T-cell (primary cell): ENCODE measurements at regions of chr2 and their contacts with region 1.

Region 1: GRCh38 chr2:142280831-142281230 is 150.0 kb upstream of the LRP1B start:
- DNase-seq: no peak
- ATAC-seq: no peak
- H3K4me3 ChIP-seq: no peak overlapping the region
- H3K4me3 Mint-ChIP-seq: no peak overlapping the region
- H3K27ac ChIP-seq: no peak overlapping the region
- H3K27ac Mint-ChIP-seq: no peak overlapping the region
- H3K4me1 ChIP-seq: no peaks in the 10 kb centered on the region
- H3K4me1 Mint-ChIP-seq: no peaks in the 10 kb centered on the region
- H3K27me3 ChIP-seq: no peaks in the 10 kb centered on the region
- H3K27me3 Mint-ChIP-seq: no peaks in the 10 kb centered on the region

Region 2: GRCh38 chr2:142515493-142515892 is 234.7 kb after region 1 on chr2:
- CTCF ChIA-PET with region 1: no interaction called
- POLR2A ChIA-PET with region 1: interaction called in 1 of 2 experiments, 11 read pairs
- DNase-seq: no peak
- ATAC-seq: no peak
- H3K4me3 ChIP-seq: no peak overlapping the region
- H3K4me3 Mint-ChIP-seq: no peak overlapping the region
- H3K27ac ChIP-seq: no peak overlapping the region
- H3K27ac Mint-ChIP-seq: no peak overlapping the region
- H3K4me1 ChIP-seq: no peaks in the 10 kb centered on the region
- H3K4me1 Mint-ChIP-seq: no peaks in the 10 kb centered on the region
- H3K27me3 ChIP-seq: no peaks in the 10 kb centered on the region
- H3K27me3 Mint-ChIP-seq: no peaks in the 10 kb centered on the region